ENCODE measurements at regions of chr19 and their contacts with region 1.

Region 1: GRCh38 chr19:41951686-41952172 is 7.4 kb downstream of the RABAC1 start:
- DNase-seq: peak; percentile 75
- H3K4me3 Mint-ChIP-seq: no peak overlapping the region
- H3K27ac Mint-ChIP-seq: peak overlapping the region; percentile 14
- H3K4me1 Mint-ChIP-seq: peaks cover 18% of the 10 kb centered on the region
- H3K27me3 Mint-ChIP-seq: no peaks in the 10 kb centered on the region

Region 2: GRCh38 chr19:41934849-41935374 is 16.8 kb before region 1 on chr19:
- intact Hi-C with region 1: loop called (anchors 2 kb)
- DNase-seq: peak; percentile 59
- H3K4me3 Mint-ChIP-seq: peak overlapping the region; percentile 31
- H3K27ac Mint-ChIP-seq: peak overlapping the region; percentile 75
- H3K4me1 Mint-ChIP-seq: peaks cover 38% of the 10 kb centered on the region
- H3K27me3 Mint-ChIP-seq: peaks cover 20% of the 10 kb centered on the region